Naive thymus-derived CD4-positive, alpha-beta T cell (primary cell): ENCODE measurements at regions of chr6 and their contacts with region 1.

Region 1: GRCh38 chr6:2196079-2196679 is 49.2 kb downstream of the GMDS start:
- DNase-seq: peak in 6 of 9 donors; percentile 12 to 51 (median 36)
- ATAC-seq: peak; percentile 77
- H3K4me3 ChIP-seq: no peak overlapping the region
- H3K4me3 Mint-ChIP-seq: no peak overlapping the region
- H3K27ac ChIP-seq: no peak overlapping the region
- H3K27ac Mint-ChIP-seq: no peak overlapping the region
- H3K4me1 ChIP-seq: no peaks in the 10 kb centered on the region
- H3K4me1 Mint-ChIP-seq: peaks cover 0 to 4% (median 0%) of the 10 kb centered on the region in 7 donors
- H3K27me3 ChIP-seq: no peaks in the 10 kb centered on the region
- H3K27me3 Mint-ChIP-seq: peaks cover 0 to 10% (median 0%) of the 10 kb centered on the region in 5 donors

Region 2: DNA sequence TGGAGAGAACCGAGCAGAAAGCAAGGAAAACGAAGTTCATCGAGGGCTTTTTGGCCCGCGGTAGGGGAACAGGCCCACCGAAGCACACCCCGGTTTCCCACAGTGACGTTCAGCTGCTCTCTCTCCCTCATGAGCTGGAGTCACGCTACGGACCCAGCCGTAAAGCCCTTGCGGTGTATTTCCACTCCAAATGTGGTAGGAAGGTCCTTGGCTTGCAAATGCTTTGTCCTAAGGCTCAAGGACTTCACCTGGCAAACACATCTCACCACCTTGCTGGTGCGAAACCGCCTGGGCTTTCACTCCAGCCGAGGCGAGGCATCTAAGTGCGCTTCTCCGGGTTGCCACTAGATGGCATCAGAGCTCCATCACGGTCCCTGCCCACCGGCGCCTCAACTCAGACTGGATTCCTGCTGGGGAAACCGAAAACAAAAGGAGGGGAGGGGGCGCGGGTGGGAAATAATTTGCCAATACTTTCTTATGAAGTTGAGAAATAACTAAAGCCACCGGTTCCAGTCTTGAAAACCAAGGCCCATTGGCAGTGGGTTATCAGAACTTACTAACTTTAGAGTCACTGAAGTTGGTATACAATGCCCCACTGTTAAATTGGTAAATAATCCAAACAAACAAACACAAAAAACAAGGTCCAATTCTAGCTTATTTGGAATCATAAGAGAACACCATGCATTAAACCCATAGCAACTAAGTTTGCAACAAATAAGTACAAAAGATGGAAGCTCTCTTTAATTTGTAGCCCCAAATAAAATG is 599.9 kb before region 1 on chr6:
- CTCF ChIA-PET with region 1: interaction called, 5 read pairs
- POLR2A ChIA-PET with region 1: no interaction called
- intact Hi-C with region 1: loop called (anchors 1 kb)
- DNase-seq: peak in 8 of 9 donors; percentile 45 to 76 (median 63)
- ATAC-seq: peak; percentile 90
- H3K4me3 ChIP-seq: no peak overlapping the region
- H3K4me3 Mint-ChIP-seq: peak overlapping the region in 6 of 10 donors; percentile 7 to 42 (median 30)
- H3K27ac ChIP-seq: no peak overlapping the region
- H3K27ac Mint-ChIP-seq: peak overlapping the region in 1 of 9 donors; percentile 28
- H3K4me1 ChIP-seq: peaks cover 0 to 4% of the 10 kb centered on the region in 2 donors
- H3K4me1 Mint-ChIP-seq: peaks cover 4 to 9% (median 7%) of the 10 kb centered on the region in 7 donors
- H3K27me3 ChIP-seq: peaks cover 0 to 4% of the 10 kb centered on the region in 2 donors
- H3K27me3 Mint-ChIP-seq: peaks cover 59 to 68% (median 60%) of the 10 kb centered on the region in 5 donors

Region 3: DNA sequence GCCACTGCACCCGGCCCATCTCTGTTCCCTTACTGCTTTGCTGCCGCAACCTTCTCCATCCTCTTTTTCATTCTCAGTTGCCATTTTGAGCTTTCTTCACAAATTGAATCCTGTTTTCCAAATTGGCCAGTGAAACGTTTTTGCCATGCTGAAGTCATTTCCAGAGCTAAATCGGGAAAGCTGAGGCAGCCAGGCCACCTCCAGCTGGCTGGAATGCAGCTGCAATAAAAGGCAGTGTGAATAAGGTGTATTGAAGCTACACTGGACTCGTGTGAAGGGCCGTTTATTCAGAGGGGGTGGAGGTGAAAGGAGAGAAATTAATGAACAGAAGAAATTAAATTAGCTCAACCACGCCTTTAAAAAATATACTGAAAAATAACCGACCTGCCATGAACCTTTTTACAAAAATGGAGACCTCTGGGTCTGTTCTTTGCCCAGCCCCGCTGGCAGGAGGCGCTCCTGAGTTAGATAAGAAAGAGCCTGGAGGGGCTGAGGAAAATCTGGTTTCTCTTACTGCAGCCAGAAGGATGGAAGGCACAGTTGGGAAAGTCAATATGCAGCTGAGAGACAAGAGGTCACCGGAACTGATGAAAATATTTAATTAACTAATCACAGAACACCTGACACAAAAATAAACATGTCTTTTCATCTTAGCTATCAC is 302.6 kb before region 1 on chr6:
- CTCF ChIA-PET with region 1: no interaction called
- POLR2A ChIA-PET with region 1: no interaction called
- intact Hi-C with region 1: loop called in 1 of 2 experiments (anchors 10 kb)
- DNase-seq: no peak
- ATAC-seq: no peak
- H3K4me3 ChIP-seq: no peak overlapping the region
- H3K4me3 Mint-ChIP-seq: no peak overlapping the region
- H3K27ac ChIP-seq: no peak overlapping the region
- H3K27ac Mint-ChIP-seq: no peak overlapping the region
- H3K4me1 ChIP-seq: no peaks in the 10 kb centered on the region
- H3K4me1 Mint-ChIP-seq: peaks cover 0 to 4% (median 0%) of the 10 kb centered on the region in 7 donors
- H3K27me3 ChIP-seq: no peaks in the 10 kb centered on the region
- H3K27me3 Mint-ChIP-seq: no peaks in the 10 kb centered on the region

Region 4: GRCh38 chr6:2353412-2354137 is 157.4 kb after region 1 on chr6:
- CTCF ChIA-PET with region 1: no interaction called
- POLR2A ChIA-PET with region 1: no interaction called
- intact Hi-C with region 1: loop called in 1 of 2 experiments (anchors 2 kb)
- DNase-seq: peak; percentile 9 to 48 (median 39)
- ATAC-seq: peak; percentile 42
- H3K4me3 ChIP-seq: no peak overlapping the region
- H3K4me3 Mint-ChIP-seq: no peak overlapping the region
- H3K27ac ChIP-seq: no peak overlapping the region
- H3K27ac Mint-ChIP-seq: no peak overlapping the region
- H3K4me1 ChIP-seq: no peaks in the 10 kb centered on the region
- H3K4me1 Mint-ChIP-seq: no peaks in the 10 kb centered on the region
- H3K27me3 ChIP-seq: no peaks in the 10 kb centered on the region
- H3K27me3 Mint-ChIP-seq: peaks cover 0 to 7% (median 0%) of the 10 kb centered on the region in 5 donors